ENCODE measurements at regions of chr10 and their contacts with region 1.

Region 1: DNA sequence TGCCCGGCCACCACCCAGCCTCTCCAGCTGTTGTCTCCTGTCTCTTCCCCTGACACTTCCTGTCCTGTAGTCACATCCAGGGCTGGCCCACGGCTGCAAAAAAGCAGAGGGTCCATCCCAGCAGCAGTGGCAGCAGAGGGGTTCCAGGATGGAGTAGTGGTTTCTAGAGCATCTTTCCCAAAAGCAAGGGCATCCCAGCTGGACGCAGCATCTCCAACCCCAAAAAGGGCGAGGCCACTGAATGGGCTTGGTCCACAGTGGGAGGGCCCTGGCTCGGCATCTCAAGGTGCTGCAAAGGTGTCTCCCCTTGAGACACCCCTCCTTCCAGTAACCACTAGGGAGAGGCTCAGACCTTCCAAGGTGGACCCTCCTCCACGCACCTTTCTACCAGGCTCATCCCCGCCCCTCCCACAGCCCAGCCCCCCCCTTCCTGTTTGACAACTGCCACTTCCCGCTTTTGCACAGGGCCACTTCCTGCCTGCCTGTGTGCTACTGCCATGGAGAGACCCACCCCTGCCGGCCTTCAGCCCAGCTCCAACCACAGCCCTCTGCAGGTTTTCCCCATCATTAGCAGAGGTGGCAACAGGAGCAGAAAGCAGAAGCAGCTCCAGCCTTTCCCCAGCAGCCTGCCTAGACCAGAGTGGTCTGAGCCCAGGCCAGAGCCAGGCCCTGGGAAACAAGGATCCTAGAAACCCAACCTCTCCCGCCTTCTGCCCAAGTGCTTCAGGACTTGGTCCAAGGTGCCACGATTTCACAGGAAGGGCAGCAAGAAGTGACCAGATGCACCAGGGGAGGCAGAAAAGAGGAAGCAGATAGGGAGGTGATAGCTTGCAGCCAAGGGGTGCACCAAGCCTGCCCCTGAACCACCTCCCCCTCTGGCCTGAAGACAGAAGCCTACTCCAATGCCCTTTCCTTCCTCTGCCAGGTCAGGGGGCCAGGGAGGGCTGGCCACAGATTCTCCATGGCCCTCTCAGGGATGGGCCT is 8.6 kb downstream of the CAMK2G start:
- DNase-seq: peak; percentile 72
- H3K4me3 Mint-ChIP-seq: peak overlapping the region; percentile 76
- H3K27ac Mint-ChIP-seq: peak overlapping the region; percentile 96
- H3K4me1 Mint-ChIP-seq: peaks cover 89% of the 10 kb centered on the region
- H3K27me3 Mint-ChIP-seq: no peaks in the 10 kb centered on the region

Region 2: DNA sequence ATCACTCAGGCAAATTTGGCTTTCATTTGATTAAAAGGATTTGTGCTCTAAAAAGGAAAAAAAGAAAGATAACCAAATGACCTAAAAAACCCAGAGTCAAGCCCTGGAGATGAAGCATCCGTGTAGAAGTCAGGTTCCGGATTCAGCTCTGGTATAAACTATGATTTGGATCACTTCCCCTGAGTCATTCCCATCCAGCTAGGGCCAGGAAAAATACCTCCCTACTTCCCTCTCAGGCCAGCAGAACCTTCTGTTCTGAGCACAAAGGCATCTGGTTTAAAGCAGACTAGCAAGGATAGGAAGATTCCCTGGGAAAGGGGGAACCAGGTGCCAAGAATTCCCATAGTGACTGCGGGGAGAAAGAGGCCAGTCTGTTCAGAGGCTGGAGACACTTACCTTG is 28.7 kb before region 1 on chr10:
- CTCF ChIA-PET with region 1: no interaction called
- POLR2A ChIA-PET with region 1: no interaction called
- DNase-seq: no peak
- H3K4me3 Mint-ChIP-seq: no peak overlapping the region
- H3K27ac Mint-ChIP-seq: no peak overlapping the region
- H3K4me1 Mint-ChIP-seq: no peaks in the 10 kb centered on the region
- H3K27me3 Mint-ChIP-seq: no peaks in the 10 kb centered on the region

Region 3: DNA sequence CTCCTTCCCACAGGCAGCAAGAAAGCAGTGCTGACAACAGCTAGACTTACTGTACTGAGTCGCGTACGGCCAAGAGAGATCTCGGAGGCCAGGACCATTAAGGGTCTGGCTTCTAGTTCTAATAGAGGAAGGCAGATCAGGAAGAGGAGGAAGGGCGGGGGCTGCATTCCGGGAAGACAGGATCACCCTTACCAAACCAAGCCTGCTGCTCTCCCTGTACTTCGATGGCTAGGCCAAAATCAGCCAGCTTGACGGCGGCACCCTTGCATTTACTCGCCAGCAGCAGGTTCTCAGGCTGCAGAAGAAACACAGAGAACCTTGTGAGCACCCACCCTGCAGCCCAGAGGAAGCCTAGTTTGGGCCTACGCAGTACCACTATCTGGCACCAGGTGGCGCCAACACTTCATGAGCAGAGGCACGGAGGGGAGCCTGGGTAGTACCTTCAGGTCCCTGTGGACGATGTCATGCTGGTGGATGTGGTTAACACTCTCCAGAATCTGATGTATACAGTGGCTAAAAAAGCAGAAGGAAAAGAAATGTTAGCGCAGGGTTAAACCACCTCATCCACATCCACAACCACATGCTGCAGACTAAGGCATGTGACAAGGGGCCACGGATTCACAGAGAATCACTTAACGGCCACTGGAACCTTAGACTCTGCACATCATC is 16.8 kb before region 1 on chr10:
- CTCF ChIA-PET with region 1: interaction called, 19 read pairs
- POLR2A ChIA-PET with region 1: no interaction called
- DNase-seq: peak; percentile 93
- H3K4me3 Mint-ChIP-seq: no peak overlapping the region
- H3K27ac Mint-ChIP-seq: peak overlapping the region; percentile 73
- H3K4me1 Mint-ChIP-seq: peaks cover 24% of the 10 kb centered on the region
- H3K27me3 Mint-ChIP-seq: no peaks in the 10 kb centered on the region